ENCODE measurements at regions of chr12 and their contacts with region 1.

Region 1: DNA sequence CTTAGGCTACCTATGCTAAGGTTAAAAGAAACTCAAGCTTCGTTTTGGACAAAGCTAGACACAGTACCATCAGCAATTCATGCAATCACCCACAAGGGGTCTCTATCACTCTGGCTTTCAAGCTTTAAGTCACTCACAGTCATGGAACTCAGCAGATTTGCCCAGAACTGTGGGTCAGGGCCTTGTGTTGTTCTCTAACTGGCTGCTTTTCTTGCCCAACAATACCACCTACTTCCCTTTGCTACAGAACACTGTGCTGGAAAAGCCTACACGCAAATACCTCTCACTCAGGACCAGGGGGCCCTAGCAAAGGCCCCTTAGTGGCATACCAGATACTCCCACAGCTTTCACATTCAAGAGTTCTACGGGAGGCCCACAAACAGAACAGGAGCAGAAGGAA is 9.1 kb downstream of the NEMP1 start:
- DNase-seq: peak; percentile 43 to 84 (median 50)
- ATAC-seq: peak; percentile 97
- H3K4me3 ChIP-seq: no peak overlapping the region
- H3K27ac ChIP-seq: no peak overlapping the region
- H3K4me1 ChIP-seq: peaks cover 0 to 7% of the 10 kb centered on the region in 2 experiments; a peak in 1 of 5 replicates
- H3K27me3 ChIP-seq: no peaks in the 10 kb centered on the region
- CTCF ChIP-seq: peak; percentile 83 to 93 (median 85)
- EP300 ChIP-seq: no peak
- POLR2A ChIP-seq: no peak
- RAD21 ChIP-seq: peak; percentile 97 to 99

Region 2: GRCh38 chr12:56751712-56752598 is 317.6 kb before region 1 on chr12 and contains the start of gene PRIM1:
- CTCF ChIA-PET with region 1: no interaction called
- POLR2A ChIA-PET with region 1: no interaction called
- in situ Hi-C with region 1: loop called (anchors 10 kb)
- intact Hi-C with region 1: no loop called
- DNase-seq: peak; percentile 90 to 96 (median 93)
- ATAC-seq: peak; percentile 90
- H3K4me3 ChIP-seq: peak within 1 kb of the TSS; percentile 72
- H3K27ac ChIP-seq: peak within 1 kb of the TSS; percentile 97
- H3K4me1 ChIP-seq: peaks cover 11 to 16% of the 10 kb centered on the region in 2 experiments; a peak in 4 of 5 replicates
- H3K27me3 ChIP-seq: no peaks in the 10 kb centered on the region
- CTCF ChIP-seq: no peak
- EP300 ChIP-seq: no peak
- POLR2A ChIP-seq: peak; percentile 94
- RAD21 ChIP-seq: no peak
- polyA plus RNA-seq, gene PRIM1: 175 to 179 TPM

Region 3: GRCh38 chr12:57088459-57089248 is 19.1 kb after region 1 on chr12 and contains the start of gene NAB2:
- CTCF ChIA-PET with region 1: interaction called, 27 read pairs
- POLR2A ChIA-PET with region 1: interaction called, 5 read pairs
- in situ Hi-C with region 1: no loop called
- intact Hi-C with region 1: loop called (anchors 1 kb)
- DNase-seq: peak; percentile 85 to 97 (median 90)
- ATAC-seq: peak; percentile 69
- H3K4me3 ChIP-seq: peak within 1 kb of the TSS; percentile 75
- H3K27ac ChIP-seq: peak within 1 kb of the TSS; percentile 93
- H3K4me1 ChIP-seq: peaks cover 33 to 66% of the 10 kb centered on the region in 2 experiments
- H3K27me3 ChIP-seq: no peaks in the 10 kb centered on the region
- CTCF ChIP-seq: no peak
- EP300 ChIP-seq: peak; percentile 47; the same call in 1 of the 2 replicates
- POLR2A ChIP-seq: peak; percentile 78
- RAD21 ChIP-seq: no peak
- polyA plus RNA-seq, gene NAB2: 0.45 to 0.52 TPM

Region 4: GRCh38 chr12:57175428-57176138 is 106.1 kb after region 1 on chr12:
- CTCF ChIA-PET with region 1: interaction called, 9 read pairs
- POLR2A ChIA-PET with region 1: no interaction called
- in situ Hi-C with region 1: loop called (anchors 5 kb)
- intact Hi-C with region 1: no loop called
- DNase-seq: peak; percentile 82 to 88 (median 86)
- ATAC-seq: peak; percentile 88
- H3K4me3 ChIP-seq: no peak overlapping the region
- H3K27ac ChIP-seq: no peak overlapping the region
- H3K4me1 ChIP-seq: peaks cover 12 to 57% of the 10 kb centered on the region in 2 experiments; a peak in 4 of 5 replicates
- H3K27me3 ChIP-seq: peaks cover 11 to 55% of the 10 kb centered on the region in 2 experiments; a peak in 4 of 5 replicates
- CTCF ChIP-seq: peak; percentile 83 to 97 (median 94)
- EP300 ChIP-seq: no peak
- POLR2A ChIP-seq: no peak
- RAD21 ChIP-seq: peak; percentile 62 to 82

Region 5: DNA sequence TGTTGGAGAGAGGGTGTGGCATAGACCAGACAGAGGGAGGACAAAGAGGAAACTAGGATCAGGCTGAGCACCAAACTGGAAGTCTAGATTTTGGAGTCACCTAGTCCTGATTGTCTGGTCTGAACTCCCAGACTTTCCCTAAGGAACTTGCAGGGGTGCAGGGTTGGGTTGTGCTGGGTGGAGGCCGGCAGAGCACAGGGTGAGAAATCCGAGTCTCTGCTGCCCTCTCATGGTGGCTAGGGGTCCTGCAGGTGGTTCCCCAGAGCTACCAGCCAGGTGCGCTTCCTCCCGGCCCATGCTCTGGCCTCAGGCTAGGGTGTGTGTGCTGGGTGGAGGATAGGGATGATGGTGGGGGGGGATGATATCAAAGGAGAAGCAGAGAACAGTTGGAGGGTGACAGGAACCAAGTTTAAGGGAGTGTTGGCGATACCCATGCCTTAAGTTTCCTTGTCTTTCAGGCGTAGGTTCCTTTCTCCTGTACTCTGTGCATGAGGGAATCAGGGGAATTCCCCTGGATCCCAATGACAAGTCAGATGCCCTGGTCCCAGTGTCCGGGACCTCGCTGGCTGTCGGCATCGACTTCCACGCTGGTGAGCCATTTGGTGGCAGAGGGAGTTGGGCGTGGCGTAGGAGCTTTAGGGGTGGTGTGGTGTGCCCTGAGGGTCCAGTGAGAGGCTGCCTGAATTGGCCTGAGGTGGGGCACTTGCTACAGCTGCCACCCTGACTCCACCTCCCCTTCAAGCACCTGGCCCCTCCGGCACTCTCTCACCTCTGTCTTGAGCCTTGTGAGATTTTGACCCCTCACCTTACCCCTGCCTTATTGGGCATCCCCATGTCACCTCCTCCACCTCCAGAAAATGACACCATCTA is 113.6 kb after region 1 on chr12:
- CTCF ChIA-PET with region 1: interaction called, 11 read pairs
- POLR2A ChIA-PET with region 1: no interaction called
- in situ Hi-C with region 1: loop called (anchors 5 kb)
- intact Hi-C with region 1: loop called (anchors 2 kb)
- DNase-seq: peak; percentile 78 to 92 (median 90)
- ATAC-seq: peak; percentile 95
- H3K4me3 ChIP-seq: no peak overlapping the region
- H3K27ac ChIP-seq: no peak overlapping the region
- H3K4me1 ChIP-seq: peaks cover 0 to 37% of the 10 kb centered on the region in 2 experiments; a peak in 3 of 5 replicates
- H3K27me3 ChIP-seq: peaks cover 56 to 87% of the 10 kb centered on the region in 2 experiments
- CTCF ChIP-seq: peak; percentile 93 to 96 (median 93)
- EP300 ChIP-seq: no peak
- POLR2A ChIP-seq: no peak
- RAD21 ChIP-seq: peak; percentile 86 to 92

Measured in K562 (cell line).